ENCODE measurements at regions of chr1 and their contacts with region 1.

Region 1: GRCh38 chr1:55021965-55022546 is 17.3 kb upstream of the PCSK9 start:
- DNase-seq: peak; percentile 83
- ATAC-seq: peak; percentile 100
- H3K4me3 Mint-ChIP-seq: no peak overlapping the region
- H3K27ac Mint-ChIP-seq: no peak overlapping the region
- H3K4me1 Mint-ChIP-seq: no peaks in the 10 kb centered on the region
- H3K27me3 Mint-ChIP-seq: peaks cover 1% of the 10 kb centered on the region
- CTCF ChIP-seq: peak; percentile 86

Region 2: DNA sequence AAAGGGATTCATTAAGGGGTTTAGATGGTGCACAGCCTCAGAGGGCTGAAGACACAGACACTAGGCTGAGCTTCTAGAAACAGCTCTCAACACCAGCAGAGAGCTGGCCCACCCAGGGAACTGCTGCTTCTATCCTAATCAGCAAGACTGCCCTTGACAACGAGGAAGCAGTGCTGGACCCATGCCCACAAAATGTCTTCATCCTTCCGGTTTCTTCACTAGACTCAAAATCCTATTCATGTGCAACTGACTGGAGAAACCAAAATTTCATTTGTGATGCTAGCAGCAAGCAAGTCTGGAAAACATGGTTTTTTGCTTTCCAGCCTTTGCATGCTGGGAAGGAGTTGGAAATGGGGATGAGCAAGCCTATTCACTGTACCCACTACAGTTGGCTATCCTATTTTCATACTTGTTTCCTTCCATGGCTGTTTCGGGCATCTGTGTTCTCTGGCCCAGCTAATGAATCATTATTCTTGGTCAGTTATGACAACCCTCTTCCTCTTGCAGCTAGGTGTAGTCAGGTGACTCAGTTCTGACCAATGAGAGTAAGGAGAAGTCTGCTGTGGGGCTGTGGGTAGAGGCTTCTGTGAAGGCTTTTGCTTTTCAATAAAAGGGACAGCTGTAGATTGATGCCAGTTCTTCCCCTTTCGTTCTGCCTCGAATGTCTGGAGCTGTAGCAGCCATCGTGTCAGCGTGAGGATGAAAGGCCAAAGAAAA is 56.3 kb before region 1 on chr1:
- CTCF ChIA-PET with region 1: interaction called, 10 read pairs
- POLR2A ChIA-PET with region 1: no interaction called
- intact Hi-C with region 1: no loop called
- DNase-seq: peak; percentile 10
- ATAC-seq: peak; percentile 58
- H3K4me3 Mint-ChIP-seq: no peak overlapping the region
- H3K27ac Mint-ChIP-seq: no peak overlapping the region
- H3K4me1 Mint-ChIP-seq: peaks cover 5% of the 10 kb centered on the region
- H3K27me3 Mint-ChIP-seq: peaks cover 13% of the 10 kb centered on the region
- CTCF ChIP-seq: no peak

Region 3: DNA sequence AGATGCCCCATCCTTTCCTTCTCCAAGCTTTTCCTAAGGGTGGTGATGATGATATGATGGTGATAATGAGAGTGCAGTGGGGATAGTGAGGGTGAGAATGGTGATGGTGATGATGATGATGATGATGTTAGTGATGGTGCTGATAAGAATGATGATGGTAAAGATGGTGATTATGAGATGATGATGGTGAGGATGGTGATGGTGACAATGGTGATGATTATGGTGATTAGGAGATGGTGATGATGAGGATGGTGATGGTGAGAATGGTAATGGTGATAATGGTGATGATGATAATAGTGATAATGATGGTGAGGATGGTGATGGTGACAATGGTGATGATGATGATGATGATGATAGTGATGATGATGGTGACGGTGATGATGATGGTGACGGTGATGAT is 19.4 kb before region 1 on chr1:
- CTCF ChIA-PET with region 1: interaction called, 12 read pairs
- POLR2A ChIA-PET with region 1: no interaction called
- intact Hi-C with region 1: no loop called
- DNase-seq: no peak
- ATAC-seq: no peak
- H3K4me3 Mint-ChIP-seq: no peak overlapping the region
- H3K27ac Mint-ChIP-seq: no peak overlapping the region
- H3K4me1 Mint-ChIP-seq: no peaks in the 10 kb centered on the region
- H3K27me3 Mint-ChIP-seq: peaks cover 14% of the 10 kb centered on the region
- CTCF ChIP-seq: no peak

Region 4: DNA sequence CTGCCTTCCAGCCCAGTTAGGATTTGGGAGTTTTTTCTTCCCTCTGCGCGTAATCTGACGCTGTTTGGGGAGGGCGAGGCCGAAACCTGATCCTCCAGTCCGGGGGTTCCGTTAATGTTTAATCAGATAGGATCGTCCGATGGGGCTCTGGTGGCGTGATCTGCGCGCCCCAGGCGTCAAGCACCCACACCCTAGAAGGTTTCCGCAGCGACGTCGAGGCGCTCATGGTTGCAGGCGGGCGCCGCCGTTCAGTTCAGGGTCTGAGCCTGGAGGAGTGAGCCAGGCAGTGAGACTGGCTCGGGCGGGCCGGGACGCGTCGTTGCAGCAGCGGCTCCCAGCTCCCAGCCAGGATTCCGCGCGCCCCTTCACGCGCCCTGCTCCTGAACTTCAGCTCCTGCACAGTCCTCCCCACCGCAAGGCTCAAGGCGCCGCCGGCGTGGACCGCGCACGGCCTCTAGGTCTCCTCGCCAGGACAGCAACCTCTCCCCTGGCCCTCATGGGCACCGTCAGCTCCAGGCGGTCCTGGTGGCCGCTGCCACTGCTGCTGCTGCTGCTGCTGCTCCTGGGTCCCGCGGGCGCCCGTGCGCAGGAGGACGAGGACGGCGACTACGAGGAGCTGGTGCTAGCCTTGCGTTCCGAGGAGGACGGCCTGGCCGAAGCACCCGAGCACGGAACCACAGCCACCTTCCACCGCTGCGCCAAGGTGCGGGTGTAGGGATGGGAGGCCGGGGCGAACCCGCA is 17.5 kb after region 1 on chr1 and contains the start of gene PCSK9:
- CTCF ChIA-PET with region 1: interaction called, 10 read pairs
- POLR2A ChIA-PET with region 1: no interaction called
- intact Hi-C with region 1: no loop called
- DNase-seq: no peak
- ATAC-seq: no peak
- H3K4me3 Mint-ChIP-seq: no peak within 1 kb of the TSS
- H3K27ac Mint-ChIP-seq: no peak within 1 kb of the TSS
- H3K4me1 Mint-ChIP-seq: peaks cover 3% of the 10 kb centered on the region
- H3K27me3 Mint-ChIP-seq: peaks cover 48% of the 10 kb centered on the region
- CTCF ChIP-seq: no peak
- total RNA-seq, gene PCSK9: not detected

Measured in activated CD8-positive, alpha-beta T cell treated with anti-CD3 and anti-CD28 coated beads for 36 hours (primary cell).